GM18951 (cell line): ENCODE measurements at regions of chr10 and their contacts with region 1.

Region 1: DNA sequence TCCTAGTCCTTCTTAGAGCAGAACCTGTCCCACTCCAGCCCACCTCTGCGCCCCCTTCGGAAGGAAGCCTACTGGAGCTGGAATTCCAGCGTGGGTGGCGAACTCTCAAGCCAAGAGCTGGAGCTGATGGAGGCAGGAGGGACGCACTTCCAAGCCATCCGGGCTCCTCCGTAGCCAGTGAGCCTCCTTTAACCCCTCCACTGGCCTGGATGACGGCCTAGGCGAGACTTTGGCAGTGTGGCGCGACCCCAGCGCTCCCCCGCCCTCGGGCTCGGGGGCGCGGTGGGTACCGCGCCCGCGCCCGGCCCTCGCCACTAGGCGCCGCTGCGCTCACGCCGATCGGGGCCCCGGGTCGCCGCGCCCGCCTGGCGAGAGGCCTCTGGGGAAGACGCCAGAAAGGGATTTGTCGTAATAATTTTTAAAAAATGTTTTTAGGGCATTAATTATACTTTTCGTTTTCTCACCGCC is 5.1 kb upstream of the EMX2 start:
- POLR2A ChIP-seq: no peak

Region 2: GRCh38 chr10:117574498-117575146 is 37.2 kb after region 1 on chr10:
- in situ Hi-C with region 1: no loop called
- POLR2A ChIP-seq: no peak

Region 3: GRCh38 chr10:118241229-118242137 is 704.0 kb after region 1 on chr10:
- in situ Hi-C with region 1: loop called (anchors 25 kb)
- POLR2A ChIP-seq: no peak